BJ (cell line): ENCODE measurements at regions of chr15 and their contacts with region 1.

Region 1: GRCh38 chr15:91068966-91069365 is 31.1 kb upstream of the SV2B start:
- DNase-seq: no peak
- H3K4me3 ChIP-seq: no peak overlapping the region
- H3K27me3 ChIP-seq: no peaks in the 10 kb centered on the region
- CTCF ChIP-seq: no peak

Region 2: GRCh38 chr15:90729261-90729660 is 339.7 kb before region 1 on chr15:
- CTCF ChIA-PET with region 1: no interaction called
- POLR2A ChIA-PET with region 1: no interaction called
- DNase-seq: no peak
- H3K4me3 ChIP-seq: no peak overlapping the region
- H3K27me3 ChIP-seq: no peaks in the 10 kb centered on the region
- CTCF ChIP-seq: no peak

Region 3: DNA sequence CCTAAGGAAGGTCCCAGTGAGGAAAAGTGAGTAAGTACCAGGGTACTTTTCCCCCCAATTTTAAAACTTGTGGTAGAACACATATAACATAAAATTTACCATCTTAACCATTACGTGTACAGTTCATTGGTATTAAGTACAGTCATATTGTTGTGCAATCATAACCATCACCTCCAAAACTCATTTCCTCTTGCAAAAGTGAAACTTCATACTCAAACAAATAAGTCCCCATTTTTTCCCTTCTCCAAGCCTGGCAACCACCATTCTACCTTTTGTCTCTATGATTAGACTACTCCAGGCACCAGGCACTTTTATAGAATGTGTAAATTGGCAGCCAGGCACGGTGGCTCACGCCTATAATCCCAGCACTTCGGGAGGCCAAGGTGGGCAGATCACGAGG is 86.8 kb before region 1 on chr15:
- CTCF ChIA-PET with region 1: no interaction called
- POLR2A ChIA-PET with region 1: no interaction called
- DNase-seq: no peak
- H3K4me3 ChIP-seq: no peak overlapping the region
- H3K27me3 ChIP-seq: no peaks in the 10 kb centered on the region
- CTCF ChIP-seq: no peak

Region 4: GRCh38 chr15:91055548-91056331 is 13.2 kb before region 1 on chr15:
- CTCF ChIA-PET with region 1: interaction called, 14 read pairs
- POLR2A ChIA-PET with region 1: no interaction called
- DNase-seq: no peak
- H3K4me3 ChIP-seq: no peak overlapping the region
- H3K27me3 ChIP-seq: peaks cover 2% of the 10 kb centered on the region
- CTCF ChIP-seq: peak; percentile 73

Region 5: GRCh38 chr15:91135201-91136130 is 66.5 kb after region 1 on chr15:
- CTCF ChIA-PET with region 1: no interaction called
- POLR2A ChIA-PET with region 1: no interaction called
- DNase-seq: no peak
- H3K4me3 ChIP-seq: no peak overlapping the region
- H3K27me3 ChIP-seq: no peaks in the 10 kb centered on the region
- CTCF ChIP-seq: no peak